Activated T-helper 1 cell treated with anti-CD3 and anti-CD28 coated beads, Interleukin-12 subunit alpha, Interleukin-12 subunit beta, Interleukin-2, Interleukin-4 antibody, amounts not matched to agents 30 ng/mL and 10 ng/mL and 1 ng/mL, durations not matched to agents 14 hours and 24 hours and 36 hours (primary cell): ENCODE measurements at regions of chr14 and their contacts with region 1.

Region 1: GRCh38 chr14:74257078-74257989 is 18.1 kb downstream of the VSX2 start:
- DNase-seq: peak; percentile 43
- H3K4me3 Mint-ChIP-seq: peak overlapping the region; percentile 84
- H3K27ac Mint-ChIP-seq: peak overlapping the region; percentile 72
- H3K4me1 Mint-ChIP-seq: no peaks in the 10 kb centered on the region
- H3K27me3 Mint-ChIP-seq: peaks cover 26% of the 10 kb centered on the region

Region 2: GRCh38 chr14:74223016-74223415 is 34.3 kb before region 1 on chr14:
- intact Hi-C with region 1: no loop called
- DNase-seq: no peak
- H3K4me3 Mint-ChIP-seq: no peak overlapping the region
- H3K27ac Mint-ChIP-seq: no peak overlapping the region
- H3K4me1 Mint-ChIP-seq: no peaks in the 10 kb centered on the region
- H3K27me3 Mint-ChIP-seq: peaks cover 16% of the 10 kb centered on the region

Region 3: GRCh38 chr14:74302634-74303577 is 45.6 kb after region 1 on chr14 and contains the start of gene ABCD4:
- intact Hi-C with region 1: loop called (anchors 1 kb)
- DNase-seq: peak; percentile 79
- H3K4me3 Mint-ChIP-seq: peak within 1 kb of the TSS; percentile 99
- H3K27ac Mint-ChIP-seq: peak within 1 kb of the TSS; percentile 86
- H3K4me1 Mint-ChIP-seq: peaks cover 22% of the 10 kb centered on the region
- H3K27me3 Mint-ChIP-seq: no peaks in the 10 kb centered on the region
- total RNA-seq, gene ABCD4: 38.8 and 44.4 TPM in 2 replicates

Region 4: DNA sequence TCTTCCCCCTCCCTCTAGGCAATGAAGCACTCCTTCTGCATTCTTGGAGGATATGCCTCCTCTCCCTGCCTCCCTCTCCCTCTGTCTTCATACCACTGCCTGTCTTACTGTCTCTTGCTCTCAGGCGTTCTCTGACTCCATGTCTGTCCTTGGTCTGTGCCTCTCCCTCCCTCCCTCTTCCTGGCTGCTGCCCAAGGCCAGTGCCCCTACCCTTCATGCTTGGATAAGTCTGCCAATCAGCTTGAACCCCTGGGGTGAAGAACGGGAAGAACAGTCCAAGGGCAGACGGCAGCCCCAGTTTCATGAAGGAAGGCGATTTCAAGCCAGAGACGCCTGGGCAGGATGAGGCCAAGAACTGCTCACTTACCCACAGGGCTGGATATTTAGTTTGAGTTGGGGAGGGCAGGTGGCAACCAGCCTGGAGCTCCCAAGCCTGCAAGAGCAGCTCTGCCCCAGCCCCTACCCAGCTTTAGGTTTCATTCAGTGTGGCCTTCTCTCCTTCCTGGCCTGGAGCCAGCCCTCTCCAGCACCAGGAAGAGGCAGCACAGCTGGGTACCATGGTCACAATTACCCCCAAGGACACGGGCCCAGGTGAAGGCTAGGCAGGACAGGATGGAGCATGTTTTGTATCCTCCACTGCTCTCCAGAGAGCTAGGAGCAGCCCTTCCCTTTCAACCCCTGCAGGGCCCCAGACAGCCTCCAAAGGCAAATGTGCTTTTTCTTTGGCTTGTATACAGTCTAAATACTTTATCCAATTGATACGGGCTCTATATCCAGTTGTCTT is 390.5 kb after region 1 on chr14:
- intact Hi-C with region 1: no loop called
- DNase-seq: no peak
- H3K4me3 Mint-ChIP-seq: no peak overlapping the region
- H3K27ac Mint-ChIP-seq: no peak overlapping the region
- H3K4me1 Mint-ChIP-seq: peaks cover 7% of the 10 kb centered on the region
- H3K27me3 Mint-ChIP-seq: peaks cover 4% of the 10 kb centered on the region

Region 5: DNA sequence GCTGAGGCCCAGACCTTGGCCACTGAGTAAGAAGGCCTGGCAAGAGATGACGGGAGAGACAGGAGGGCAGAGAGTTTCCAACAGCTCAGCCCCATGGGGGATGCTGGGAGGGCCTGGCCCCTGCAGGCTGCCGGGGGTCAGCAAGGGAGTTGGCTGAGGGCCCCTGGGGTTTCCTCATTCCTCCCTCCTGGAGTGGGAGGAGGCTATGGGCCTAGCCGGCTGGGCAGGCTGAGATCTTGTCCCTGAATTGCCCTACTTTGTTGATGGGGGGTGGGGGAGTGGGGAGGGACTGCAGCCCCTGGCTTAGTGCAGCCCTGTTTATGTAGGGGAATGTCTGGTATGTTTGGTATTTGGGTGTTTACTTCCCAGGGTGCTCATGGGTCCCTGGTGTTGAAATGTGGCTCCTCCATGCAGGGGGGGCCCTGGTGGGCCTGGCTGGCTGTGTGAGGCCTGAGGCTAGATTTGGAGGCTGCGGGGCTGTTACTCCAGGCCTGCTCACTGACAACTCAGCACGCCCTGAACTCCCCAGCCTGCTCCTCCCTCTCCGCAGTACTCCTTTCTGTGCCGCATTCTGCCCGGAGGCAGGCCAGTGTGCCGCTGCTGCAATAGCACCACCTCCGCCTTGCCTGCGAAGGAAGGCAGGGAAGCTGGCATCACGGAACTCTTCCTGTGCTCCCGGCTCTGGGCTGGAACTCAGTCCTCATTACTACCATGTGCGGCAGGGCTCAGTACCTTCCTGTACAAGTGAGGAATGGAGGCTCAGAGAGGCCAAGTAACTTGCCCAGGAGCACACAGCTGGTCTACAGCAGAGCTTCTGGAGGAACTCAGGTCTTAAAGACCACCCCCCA is 1195.8 kb after region 1 on chr14:
- intact Hi-C with region 1: no loop called
- DNase-seq: no peak
- H3K4me3 Mint-ChIP-seq: no peak overlapping the region
- H3K27ac Mint-ChIP-seq: no peak overlapping the region
- H3K4me1 Mint-ChIP-seq: peaks cover 6% of the 10 kb centered on the region
- H3K27me3 Mint-ChIP-seq: no peaks in the 10 kb centered on the region